Prostate gland (tissue), 2 donors: ENCODE measurements at regions of chr13 and their contacts with region 1.

Region 1: DNA sequence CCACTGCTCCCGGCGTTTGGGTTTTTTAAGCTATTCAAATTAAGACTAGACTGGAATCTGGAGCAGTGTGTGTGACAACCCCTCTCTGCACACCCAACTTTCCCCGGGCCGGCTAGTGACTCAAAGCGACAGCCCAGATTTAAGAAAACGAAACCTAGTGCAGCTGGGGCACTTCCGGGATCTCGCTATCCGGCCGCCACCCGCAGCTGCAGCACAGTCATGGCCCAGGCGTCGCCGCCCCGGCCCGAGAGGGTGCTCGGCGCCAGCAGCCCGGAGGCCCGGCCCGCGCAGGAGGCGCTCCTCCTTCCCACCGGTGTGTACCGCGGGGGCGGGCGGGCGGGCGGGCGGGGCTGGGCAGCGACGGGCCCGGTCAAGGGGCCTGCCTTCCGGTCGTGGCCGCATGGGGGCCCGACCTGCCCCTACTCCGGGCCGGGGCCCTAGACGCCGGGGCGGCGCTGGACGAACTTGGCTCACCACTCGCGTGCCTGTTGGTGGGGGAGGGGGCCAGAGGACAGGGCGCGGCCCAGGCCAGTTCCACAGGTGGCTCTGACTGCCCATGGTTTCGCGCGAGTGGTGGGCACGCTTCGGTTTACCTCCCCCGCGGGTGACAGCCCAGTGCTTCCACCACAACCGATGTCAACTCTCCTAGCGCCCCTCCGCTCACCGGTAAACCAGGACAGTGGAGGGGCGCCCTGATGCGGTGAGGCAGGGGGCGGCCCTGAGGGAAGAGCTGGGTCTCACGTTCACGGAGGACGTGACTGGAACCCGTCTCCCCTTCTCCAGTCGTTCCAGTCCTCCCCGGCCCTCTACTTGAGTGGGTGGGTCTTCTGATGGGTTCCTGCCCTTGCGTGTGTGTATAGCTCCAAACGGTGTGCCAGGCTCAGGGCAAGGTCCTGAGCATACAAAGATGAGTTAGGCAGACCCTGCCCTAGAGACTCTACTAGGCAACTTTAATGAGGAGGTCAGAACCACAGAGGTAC is at the start of gene PHF11:
- DNase-seq: peak; percentile 77
- H3K4me3 ChIP-seq: peak within 1 kb of the TSS; percentile 58 to 65
- H3K27ac ChIP-seq: peak within 1 kb of the TSS; percentile 92 to 95
- H3K4me1 ChIP-seq: no peaks in the 10 kb centered on the region
- H3K27me3 ChIP-seq: no peaks in the 10 kb centered on the region
- CTCF ChIP-seq: no peak
- POLR2A ChIP-seq: peak; percentile 46
- total RNA-seq, gene PHF11: 28.5 to 29.5 TPM

Region 2: DNA sequence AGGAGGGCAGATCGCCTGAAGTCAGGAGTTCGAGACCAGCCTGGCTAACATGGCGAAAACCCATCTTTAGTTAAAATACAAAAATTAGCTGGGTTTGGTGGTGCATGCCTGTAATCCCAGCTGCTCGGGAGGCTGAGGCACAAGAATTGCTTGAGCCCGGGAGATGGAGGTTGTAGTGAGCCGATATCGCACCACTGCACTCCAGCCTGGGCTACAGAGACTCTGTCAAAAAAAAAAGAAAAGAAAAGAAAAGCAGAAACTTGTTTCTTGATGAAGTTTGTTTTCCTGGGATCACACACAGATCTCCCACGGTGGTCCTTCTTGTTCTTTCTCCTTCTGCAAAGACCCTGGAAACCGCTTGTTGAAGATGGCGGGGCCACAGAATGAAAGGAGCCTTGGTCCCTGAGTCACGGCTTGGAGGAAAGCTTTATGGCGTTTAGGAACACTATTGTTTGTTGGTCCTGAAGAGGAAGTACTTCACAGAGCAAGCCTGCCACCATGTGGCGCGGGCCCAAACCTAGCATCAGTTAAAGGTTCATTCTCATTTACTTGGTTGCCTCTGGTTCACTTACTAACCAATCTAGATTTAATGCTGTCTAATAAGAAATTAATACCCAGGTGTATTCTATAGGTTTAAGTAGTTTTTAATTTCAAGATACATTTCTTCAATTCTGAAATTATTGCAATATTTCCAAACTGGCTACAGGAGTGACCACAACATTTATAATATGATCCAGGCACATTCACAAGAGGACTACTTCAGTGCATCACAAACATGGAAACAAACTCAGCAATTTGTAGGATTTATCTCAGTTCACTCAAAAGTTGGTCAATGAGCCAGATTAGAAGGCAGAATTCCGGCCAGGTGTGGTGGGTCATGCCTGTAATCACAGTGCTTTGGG is 110.9 kb after region 1 on chr13:
- intact Hi-C with region 1: loop called (anchors 5 kb)
- DNase-seq: peak; percentile 88
- H3K4me3 ChIP-seq: peak overlapping the region; percentile 9 to 19
- H3K27ac ChIP-seq: no peak overlapping the region
- H3K4me1 ChIP-seq: no peaks in the 10 kb centered on the region
- H3K27me3 ChIP-seq: no peaks in the 10 kb centered on the region
- CTCF ChIP-seq: peak; percentile 27 to 85 (median 78)
- POLR2A ChIP-seq: no peak

Region 3: GRCh38 chr13:50131920-50132903 is 636.1 kb after region 1 on chr13:
- intact Hi-C with region 1: no loop called
- DNase-seq: no peak
- H3K4me3 ChIP-seq: no peak overlapping the region
- H3K27ac ChIP-seq: no peak overlapping the region
- H3K4me1 ChIP-seq: no peaks in the 10 kb centered on the region
- H3K27me3 ChIP-seq: peaks cover 24% of the 10 kb centered on the region
- CTCF ChIP-seq: no peak
- POLR2A ChIP-seq: no peak

Region 4: DNA sequence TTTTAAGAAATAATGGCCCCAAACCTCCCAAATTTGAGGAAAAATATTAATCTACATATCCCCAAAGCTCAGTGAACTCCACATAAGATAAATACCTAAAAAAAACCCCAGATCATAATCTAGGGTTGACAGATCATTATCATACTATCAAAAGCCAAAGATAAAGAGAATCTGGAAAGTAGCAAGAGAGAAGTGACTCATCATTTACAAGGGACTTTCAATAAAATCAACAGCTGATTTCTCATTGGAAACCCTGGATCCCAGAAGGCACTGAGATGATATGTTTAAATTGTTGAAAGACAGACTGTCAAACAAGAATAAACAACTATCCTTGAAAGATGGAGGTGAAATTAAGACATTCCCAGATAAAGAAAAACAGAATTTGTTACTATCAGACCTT is 718.4 kb after region 1 on chr13:
- intact Hi-C with region 1: no loop called
- DNase-seq: no peak
- H3K4me3 ChIP-seq: no peak overlapping the region
- H3K27ac ChIP-seq: no peak overlapping the region
- H3K4me1 ChIP-seq: no peaks in the 10 kb centered on the region
- H3K27me3 ChIP-seq: no peaks in the 10 kb centered on the region
- CTCF ChIP-seq: no peak
- POLR2A ChIP-seq: no peak